Endothelial cell of umbilical vein (primary cell): ENCODE measurements at regions of chr16 and their contacts with region 1.

Region 1: DNA sequence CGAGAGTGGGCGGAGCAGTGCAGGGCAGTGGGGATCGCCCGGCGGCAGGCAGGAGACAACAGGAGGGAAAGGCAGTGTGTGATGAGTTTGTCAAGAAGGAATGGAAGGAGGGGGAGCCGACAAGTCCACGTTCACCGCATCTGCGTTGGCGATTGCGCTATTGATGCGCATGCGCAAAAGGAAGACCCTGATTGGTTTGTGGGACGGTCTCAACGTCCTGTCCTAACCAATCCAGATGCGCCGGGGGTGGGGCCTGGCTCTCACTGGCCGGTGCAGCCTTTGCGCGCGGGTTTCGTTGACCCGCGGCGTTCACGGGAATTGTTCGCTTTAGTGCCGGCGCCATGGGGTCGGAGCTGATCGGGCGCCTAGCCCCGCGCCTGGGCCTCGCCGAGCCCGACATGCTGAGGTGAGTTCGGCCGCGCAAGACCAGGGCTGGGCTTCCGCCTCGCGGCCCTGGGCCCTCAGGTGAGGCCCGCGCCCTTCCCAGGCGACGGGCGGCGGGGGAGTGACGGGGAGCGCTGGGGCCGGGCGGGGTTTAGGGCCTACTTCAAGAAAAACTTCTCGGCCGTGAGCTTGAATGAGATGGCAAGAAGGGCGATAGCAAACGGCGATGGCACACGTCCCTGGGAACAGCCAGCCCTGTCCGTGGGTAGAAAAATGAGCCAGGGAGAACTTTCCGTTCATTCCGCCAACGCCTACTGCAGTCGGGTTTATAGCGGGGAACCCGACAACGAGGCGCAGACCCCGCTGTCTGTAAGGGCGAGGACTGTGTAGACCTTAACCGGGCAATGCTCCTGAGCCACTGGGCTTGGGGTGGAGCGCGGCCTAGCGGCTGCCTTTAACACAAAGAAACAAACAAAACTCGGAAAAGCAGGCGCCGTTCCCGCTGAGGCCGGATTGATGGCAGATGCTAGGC is at the start of gene ORC6:
- DNase-seq: peak; percentile 80
- H3K4me3 ChIP-seq: peak within 1 kb of the TSS; percentile 66 to 96 (median 81)
- H3K27ac ChIP-seq: peak within 1 kb of the TSS; percentile 70
- H3K4me1 ChIP-seq: peaks cover 30% of the 10 kb centered on the region
- H3K27me3 ChIP-seq: no peaks in the 10 kb centered on the region
- CTCF ChIP-seq: peak; percentile 36 to 70
- POLR2A ChIP-seq: no peak
- total RNA-seq, gene ORC6: 31.1 and 34.9 TPM in 2 replicates

Region 2: DNA sequence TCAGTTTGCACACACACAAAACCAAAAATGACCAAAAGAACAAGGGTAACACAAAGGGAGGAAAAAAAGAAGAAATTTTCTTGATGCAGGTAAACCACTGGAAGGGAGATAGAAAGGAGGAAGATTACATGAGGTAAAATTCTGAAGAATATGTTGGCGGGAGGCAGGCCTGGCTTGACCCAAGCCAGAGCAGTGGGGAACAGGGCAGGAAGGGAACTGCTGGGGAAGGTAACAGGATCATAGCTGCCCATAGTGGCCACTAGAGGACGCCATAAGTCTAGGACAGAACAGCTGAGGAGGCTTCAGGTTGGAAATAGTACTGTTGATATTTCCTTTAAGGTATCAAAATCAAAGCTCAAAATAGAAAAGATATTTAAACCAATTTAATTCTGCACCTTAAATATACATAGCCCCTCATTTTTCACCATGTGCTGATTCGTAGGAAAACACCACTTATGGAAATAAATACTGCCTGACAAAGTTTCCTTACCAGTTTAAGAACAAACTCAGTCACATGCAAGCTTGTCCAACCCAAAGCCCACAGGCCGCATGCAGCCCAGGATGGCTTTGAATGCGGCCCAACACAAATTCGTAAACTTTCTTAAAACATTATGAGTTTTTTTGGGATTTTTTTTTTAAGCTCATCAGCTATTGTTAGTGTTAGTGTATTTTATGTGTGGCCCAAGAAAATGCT is 16.2 kb before region 1 on chr16:
- CTCF ChIA-PET with region 1: interaction called, 14 read pairs
- POLR2A ChIA-PET with region 1: no interaction called
- dilution Hi-C with region 1: no loop called
- intact Hi-C with region 1: loop called (anchors 1 kb)
- DNase-seq: peak; percentile 62
- H3K4me3 ChIP-seq: no peak overlapping the region
- H3K27ac ChIP-seq: no peak overlapping the region
- H3K4me1 ChIP-seq: no peaks in the 10 kb centered on the region
- H3K27me3 ChIP-seq: no peaks in the 10 kb centered on the region
- CTCF ChIP-seq: peak; percentile 85 to 91
- POLR2A ChIP-seq: no peak

Region 3: DNA sequence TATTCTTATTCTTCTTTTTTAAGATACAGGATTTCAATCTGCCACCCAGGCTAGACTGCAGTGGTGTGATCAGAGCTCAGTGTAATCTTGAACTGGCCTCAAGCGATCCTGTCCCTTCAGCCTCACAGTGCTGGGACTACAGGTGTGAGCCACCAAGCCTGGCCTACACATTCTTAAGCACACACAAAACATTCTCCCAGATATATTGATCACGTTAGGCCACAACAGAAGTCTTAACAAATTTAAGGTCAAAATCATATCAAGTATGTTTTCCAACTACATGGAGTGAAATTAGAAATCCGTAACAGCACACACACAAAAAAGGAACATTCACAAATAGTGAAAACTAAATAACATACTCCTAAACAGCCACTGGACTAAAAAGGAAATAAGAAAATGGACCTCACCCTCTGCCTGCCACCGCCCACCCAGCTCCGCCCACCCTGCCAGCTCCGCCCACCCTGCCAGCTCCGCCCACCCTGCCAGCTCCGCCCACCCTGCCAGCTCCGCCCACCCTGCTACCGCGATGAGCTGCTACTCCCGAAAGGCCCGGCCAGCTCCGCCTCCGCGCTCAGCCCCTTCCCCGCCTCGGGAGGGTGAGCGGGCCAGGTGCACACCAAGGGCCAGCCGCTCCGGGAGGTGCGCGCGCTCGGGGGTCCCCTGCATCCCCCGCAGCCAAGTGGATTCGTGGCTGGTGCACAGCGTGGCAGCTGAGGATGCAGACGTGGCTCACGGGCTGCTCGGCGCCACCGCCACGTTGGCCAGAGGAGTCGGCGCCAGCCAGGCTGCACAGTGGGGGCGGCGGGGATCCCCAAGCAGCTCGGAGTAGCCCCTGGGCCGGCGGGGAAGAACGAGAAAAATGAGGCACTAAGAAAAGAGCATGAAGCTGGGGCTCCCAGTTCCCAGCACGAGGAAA is 100.1 kb after region 1 on chr16:
- CTCF ChIA-PET with region 1: no interaction called
- POLR2A ChIA-PET with region 1: no interaction called
- dilution Hi-C with region 1: no loop called
- intact Hi-C with region 1: loop called (anchors 5 kb)
- DNase-seq: peak; percentile 80
- H3K4me3 ChIP-seq: peak overlapping the region; percentile 17 to 58 (median 51)
- H3K27ac ChIP-seq: peak overlapping the region; percentile 0
- H3K4me1 ChIP-seq: peaks cover 2% of the 10 kb centered on the region
- H3K27me3 ChIP-seq: peaks cover 7 to 10% of the 10 kb centered on the region in 2 experiments
- CTCF ChIP-seq: no peak
- POLR2A ChIP-seq: peak; percentile 68

Region 4: GRCh38 chr16:46830902-46831647 is 141.5 kb after region 1 on chr16 and contains the start of gene C16orf87:
- CTCF ChIA-PET with region 1: no interaction called
- POLR2A ChIA-PET with region 1: no interaction called
- dilution Hi-C with region 1: no loop called
- intact Hi-C with region 1: loop called (anchors 1 kb)
- DNase-seq: peak; percentile 93
- H3K4me3 ChIP-seq: peak within 1 kb of the TSS; percentile 74 to 91 (median 82)
- H3K27ac ChIP-seq: peak within 1 kb of the TSS; percentile 50
- H3K4me1 ChIP-seq: peaks cover 24% of the 10 kb centered on the region
- H3K27me3 ChIP-seq: peaks cover 8 to 13% of the 10 kb centered on the region in 2 experiments
- CTCF ChIP-seq: no peak
- POLR2A ChIP-seq: peak; percentile 43
- total RNA-seq, gene C16orf87: 8.5 and 11.1 TPM in 2 replicates

Region 5: GRCh38 chr16:46908540-46909372 is 219.1 kb after region 1 on chr16:
- CTCF ChIA-PET with region 1: no interaction called
- POLR2A ChIA-PET with region 1: no interaction called
- dilution Hi-C with region 1: no loop called
- intact Hi-C with region 1: loop called (anchors 1 kb)
- DNase-seq: peak; percentile 66
- H3K4me3 ChIP-seq: no peak overlapping the region
- H3K27ac ChIP-seq: no peak overlapping the region
- H3K4me1 ChIP-seq: no peaks in the 10 kb centered on the region
- H3K27me3 ChIP-seq: no peaks in the 10 kb centered on the region
- CTCF ChIP-seq: peak; percentile 42 to 61
- POLR2A ChIP-seq: no peak

Region 6: DNA sequence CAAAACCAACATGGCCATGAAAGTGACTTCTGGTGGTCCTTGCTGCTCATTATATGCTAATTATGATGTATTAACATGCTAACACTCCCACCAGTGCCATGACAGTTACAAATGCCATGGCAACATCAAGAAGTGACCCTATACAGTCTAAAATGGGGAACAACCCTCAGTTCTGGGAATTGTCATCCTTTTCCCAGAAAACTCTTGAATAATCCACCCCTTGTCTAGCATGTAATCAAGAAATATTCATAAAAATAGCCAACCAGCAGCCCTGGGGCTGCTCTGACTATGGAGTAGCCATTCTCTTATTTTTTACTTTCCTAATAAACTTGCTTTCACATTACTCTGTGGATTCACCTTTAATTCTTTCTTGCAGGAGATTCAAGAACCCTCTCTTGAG is 247.9 kb after region 1 on chr16:
- CTCF ChIA-PET with region 1: no interaction called
- POLR2A ChIA-PET with region 1: no interaction called
- dilution Hi-C with region 1: no loop called
- intact Hi-C with region 1: no loop called
- DNase-seq: no peak
- H3K4me3 ChIP-seq: no peak overlapping the region
- H3K27ac ChIP-seq: no peak overlapping the region
- H3K4me1 ChIP-seq: no peaks in the 10 kb centered on the region
- H3K27me3 ChIP-seq: no peaks in the 10 kb centered on the region
- CTCF ChIP-seq: no peak
- POLR2A ChIP-seq: no peak